Activated naive CD4-positive, alpha-beta T cell treated with anti-CD3 and anti-CD28 coated beads for 36 hours (primary cell): ENCODE measurements at regions of chr22 and their contacts with region 1.

Region 1: GRCh38 chr22:39839917-39840510 is 53.5 kb downstream of the ENTHD1 start:
- DNase-seq: peak; percentile 63
- H3K4me3 Mint-ChIP-seq: no peak overlapping the region
- H3K27ac Mint-ChIP-seq: no peak overlapping the region
- H3K4me1 Mint-ChIP-seq: peaks cover 13% of the 10 kb centered on the region
- H3K27me3 Mint-ChIP-seq: no peaks in the 10 kb centered on the region

Region 2: DNA sequence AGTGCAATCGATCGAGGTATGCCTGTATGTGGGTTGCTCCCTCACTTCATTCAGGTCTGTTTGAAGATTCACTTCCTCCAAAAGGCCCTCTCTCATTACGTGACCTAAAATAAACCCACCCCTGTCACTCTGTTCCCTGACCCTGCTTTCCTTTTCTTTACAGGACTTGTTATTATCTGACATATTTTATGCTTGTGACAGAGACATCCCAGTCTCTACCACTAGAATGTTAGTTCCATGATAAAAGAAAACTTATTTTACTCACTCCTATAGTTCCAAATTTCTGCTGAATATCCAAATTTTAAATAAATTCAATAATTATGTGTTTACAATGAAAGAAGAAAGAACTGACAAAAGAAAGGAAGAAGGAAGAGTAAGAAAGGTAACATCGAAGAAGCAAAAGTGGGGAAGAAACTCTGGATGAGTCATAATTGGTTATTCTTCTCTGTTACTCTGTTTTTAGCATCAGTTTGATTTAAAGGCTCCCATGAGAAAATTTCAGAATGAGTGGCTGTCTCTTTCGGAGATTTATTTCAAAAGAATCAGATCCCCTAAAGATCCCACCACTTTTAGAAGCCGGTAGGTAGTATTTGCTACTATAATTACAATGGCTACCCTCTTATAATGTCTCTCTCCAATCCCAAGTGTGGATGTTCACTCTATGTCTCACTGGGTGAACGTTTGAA is 20.0 kb after region 1 on chr22:
- CTCF ChIA-PET with region 1: no interaction called
- intact Hi-C with region 1: loop called (anchors 2 kb)
- DNase-seq: no peak
- H3K4me3 Mint-ChIP-seq: peak overlapping the region; percentile 46
- H3K27ac Mint-ChIP-seq: peak overlapping the region; percentile 16
- H3K4me1 Mint-ChIP-seq: peaks cover 23% of the 10 kb centered on the region
- H3K27me3 Mint-ChIP-seq: no peaks in the 10 kb centered on the region